ENCODE measurements at regions of chr6 and their contacts with region 1.

Region 1: DNA sequence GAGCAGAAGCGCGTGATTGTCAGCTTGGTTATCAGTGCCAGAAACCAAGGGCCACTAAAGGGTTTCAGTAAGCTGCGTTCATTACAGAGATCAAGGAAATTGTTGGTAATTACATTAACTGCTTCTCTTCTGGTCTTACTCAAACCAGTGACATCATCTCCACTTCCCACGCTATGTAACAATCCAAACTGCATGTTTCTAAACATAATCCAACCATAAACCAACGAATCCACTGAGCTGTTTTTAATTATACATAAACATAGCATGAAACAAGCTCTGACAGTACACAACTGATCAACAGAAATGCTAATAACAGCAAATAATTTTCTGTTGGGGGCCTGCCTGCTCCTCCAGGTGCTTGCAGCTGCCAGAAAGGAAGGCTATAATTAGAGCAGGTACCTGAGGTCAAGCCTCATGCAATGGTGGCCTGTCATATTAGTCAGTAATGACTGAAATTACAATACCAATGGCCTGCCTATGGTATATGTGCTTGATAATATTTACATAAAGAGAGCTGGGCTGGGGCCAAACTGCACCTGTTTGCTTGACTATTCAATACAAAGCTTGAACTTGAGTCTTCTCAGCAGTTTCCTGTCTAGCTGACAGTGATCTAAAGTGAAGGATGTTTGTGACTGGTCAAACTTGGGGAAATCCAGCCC is 40.1 kb downstream of the ILRUN start:
- DNase-seq: peak; percentile 41
- H3K4me3 Mint-ChIP-seq: peak overlapping the region; percentile 71
- H3K27ac Mint-ChIP-seq: peak overlapping the region; percentile 92
- H3K4me1 Mint-ChIP-seq: peaks cover 50% of the 10 kb centered on the region
- H3K27me3 Mint-ChIP-seq: no peaks in the 10 kb centered on the region

Region 2: DNA sequence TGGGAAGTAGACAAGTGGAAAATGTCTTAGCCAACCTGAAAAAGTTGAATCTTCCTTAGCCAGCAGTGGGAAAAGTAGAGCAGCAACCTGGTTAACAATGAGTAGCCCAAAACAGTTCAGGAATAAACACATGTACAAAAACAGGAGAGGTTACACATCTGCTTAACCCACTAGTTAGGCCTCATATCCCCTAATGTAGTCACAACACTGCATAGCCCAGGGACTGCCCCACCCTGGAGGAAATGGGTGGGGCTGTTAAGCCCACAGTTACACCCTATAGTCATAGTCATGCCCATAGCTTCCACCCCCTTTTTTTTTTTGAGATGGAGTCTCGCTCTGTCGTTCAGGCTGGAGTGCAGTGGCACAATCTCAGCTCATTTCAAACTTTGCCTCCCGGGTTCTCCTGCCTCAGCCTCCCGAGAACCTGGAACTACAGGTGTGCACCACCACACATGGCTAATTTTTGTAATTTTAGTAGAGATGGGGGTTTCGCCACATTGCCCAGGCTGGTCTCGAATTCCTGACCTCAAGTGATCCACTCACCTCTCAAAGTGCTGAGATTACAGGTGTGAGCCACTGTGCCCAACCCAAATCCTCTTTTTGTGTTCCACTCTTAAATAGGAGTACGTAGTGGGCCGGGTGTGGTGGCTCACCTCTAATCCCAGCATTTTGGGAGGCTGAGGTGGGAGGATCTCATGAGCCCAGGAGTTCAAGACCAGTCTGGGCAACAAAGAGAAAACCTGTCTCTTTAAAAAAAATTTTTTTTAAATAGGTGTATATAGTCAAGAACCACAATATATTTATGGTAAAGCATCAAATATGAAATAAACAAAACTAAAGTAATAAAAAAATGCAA is 15.5 kb after region 1 on chr6:
- CTCF ChIA-PET with region 1: interaction called, 10 read pairs
- DNase-seq: peak; percentile 83
- H3K4me3 Mint-ChIP-seq: peak overlapping the region; percentile 67
- H3K27ac Mint-ChIP-seq: peak overlapping the region; percentile 99
- H3K4me1 Mint-ChIP-seq: peaks cover 69% of the 10 kb centered on the region
- H3K27me3 Mint-ChIP-seq: no peaks in the 10 kb centered on the region